Activated naive CD4-positive, alpha-beta T cell treated with anti-CD3 and anti-CD28 coated beads, Interleukin-2, amount 10 ng/mL, durations not matched to agents 7 days and 5 days (primary cell): ENCODE measurements at regions of chr3 and their contacts with region 1.

Region 1: DNA sequence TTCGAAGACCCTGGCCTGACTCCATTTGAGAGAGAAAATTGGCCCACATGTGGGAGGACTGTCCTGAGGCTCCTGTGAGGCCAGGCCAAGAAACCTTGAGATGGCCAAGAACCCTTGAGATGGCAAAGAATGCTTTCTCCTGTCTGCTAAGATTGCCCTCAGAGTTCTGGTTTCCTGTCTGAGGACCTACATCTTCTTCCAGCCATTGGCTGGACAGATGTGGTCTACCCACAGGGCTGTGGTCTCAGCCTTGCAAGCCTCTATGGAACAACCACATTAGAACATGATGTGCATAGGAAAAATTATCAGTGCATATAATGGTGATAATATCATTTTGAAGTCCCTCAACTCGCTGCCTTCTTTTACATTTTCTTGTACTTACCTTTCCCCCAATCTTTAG is 10.8 kb upstream of the RASA2 start:
- DNase-seq: peak; percentile 51
- H3K4me3 Mint-ChIP-seq: no peak overlapping the region
- H3K27ac Mint-ChIP-seq: no peak overlapping the region
- H3K4me1 Mint-ChIP-seq: peaks cover 33% of the 10 kb centered on the region
- H3K27me3 Mint-ChIP-seq: peaks cover 40% of the 10 kb centered on the region

Region 2: DNA sequence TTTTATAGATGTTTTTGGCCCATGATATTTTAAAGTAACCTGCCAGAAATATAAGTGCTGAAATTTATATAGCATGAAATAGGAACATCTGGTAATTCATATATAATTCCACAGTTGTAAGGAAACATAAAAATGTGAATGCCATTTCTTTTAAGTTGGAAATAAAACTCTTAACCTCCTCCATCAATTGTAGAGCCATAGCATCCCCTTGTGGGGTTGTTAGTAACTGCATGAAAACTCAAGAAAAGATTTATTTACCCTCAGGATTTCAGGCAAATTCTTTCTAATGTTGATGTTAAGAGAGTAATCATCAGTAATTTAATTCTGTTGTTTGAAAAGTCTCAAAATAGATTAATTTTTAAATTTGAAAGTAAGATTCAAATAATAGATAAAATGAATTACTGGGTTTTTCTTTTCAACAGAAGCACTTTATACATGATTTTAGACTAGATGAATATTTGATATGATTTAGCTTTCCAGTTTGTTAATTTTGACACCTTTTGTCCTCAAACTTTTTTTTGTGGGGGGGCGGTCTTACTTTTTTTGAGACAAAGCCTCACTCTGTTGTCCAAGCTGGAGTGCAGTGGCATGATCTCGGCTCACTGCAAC is 85.5 kb after region 1 on chr3:
- CTCF ChIA-PET with region 1: interaction called, 72 read pairs
- DNase-seq: peak; percentile 53
- H3K4me3 Mint-ChIP-seq: no peak overlapping the region
- H3K27ac Mint-ChIP-seq: peak overlapping the region; percentile 63
- H3K4me1 Mint-ChIP-seq: peaks cover 21% of the 10 kb centered on the region
- H3K27me3 Mint-ChIP-seq: no peaks in the 10 kb centered on the region